ENCODE measurements at regions of chr19 and their contacts with region 1.

Region 1: DNA sequence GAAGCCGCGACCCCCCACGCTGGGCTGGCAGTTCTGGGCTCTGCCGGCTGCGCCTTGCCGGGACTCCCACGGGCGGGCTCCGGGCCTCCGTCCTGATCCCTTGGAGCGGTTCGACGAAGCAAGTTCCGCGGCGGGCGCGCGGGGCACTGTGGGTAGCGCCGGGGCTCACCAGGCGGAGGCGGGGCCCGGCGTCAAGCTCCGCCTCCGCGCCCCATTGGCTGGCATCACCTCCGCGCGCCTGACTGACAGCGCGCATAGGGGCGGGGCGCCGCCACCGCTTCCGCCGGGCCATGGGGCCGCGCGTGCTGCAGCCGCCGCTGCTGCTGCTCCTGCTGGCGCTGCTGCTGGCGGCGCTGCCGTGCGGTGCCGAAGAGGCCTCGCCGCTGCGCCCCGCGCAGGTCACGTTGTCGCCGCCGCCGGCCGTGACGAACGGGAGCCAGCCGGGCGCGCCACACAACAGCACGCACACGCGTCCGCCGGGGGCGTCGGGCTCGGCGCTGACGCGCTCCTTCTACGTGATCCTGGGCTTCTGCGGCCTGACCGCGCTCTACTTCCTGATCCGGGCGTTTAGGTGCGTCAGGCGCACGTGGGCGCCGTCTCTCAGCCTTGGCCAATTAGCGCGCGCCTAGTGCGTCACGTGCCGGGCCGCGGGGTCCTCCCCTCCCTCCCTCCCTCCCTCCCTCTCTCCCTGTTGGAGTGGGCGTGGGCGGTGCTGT is at the start of gene FAM174C:
- DNase-seq: peak; percentile 80
- H3K4me3 ChIP-seq: peak within 1 kb of the TSS; percentile 70
- CTCF ChIP-seq: no peak

Region 2: DNA sequence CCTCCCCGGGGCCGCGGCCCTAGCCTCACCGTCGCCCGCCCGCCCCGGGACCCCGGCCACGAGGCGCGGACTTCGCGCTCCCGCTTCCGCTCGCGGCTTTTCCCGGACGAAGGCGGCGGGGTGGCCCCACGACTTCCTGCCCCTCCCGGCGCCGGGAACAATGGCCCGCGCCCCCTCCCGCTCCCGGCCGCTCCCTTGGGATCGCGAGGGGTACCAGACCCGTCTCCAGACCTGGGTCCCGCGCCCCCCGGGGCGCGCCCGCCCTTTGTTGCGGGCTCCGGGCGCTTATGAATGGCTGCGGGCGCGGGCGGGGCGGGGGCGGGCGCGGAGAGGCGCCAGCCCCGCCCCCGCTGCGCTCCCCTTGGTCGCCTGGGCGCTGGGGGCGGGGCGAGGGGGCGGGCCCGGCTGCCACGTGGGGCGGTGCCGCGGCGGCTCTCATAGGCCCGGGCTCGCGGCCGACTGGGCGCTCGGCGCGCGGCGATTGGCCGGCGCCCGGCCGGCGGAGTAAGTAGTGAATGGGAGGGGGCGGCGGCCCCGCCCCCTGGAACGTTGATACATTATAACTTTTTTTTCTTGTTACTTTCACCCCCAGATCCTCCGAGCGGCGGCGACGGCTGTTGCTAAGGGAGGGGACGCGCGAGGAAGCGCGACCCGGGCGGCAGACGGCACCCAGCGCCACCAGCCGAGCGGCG is 26.0 kb before region 1 on chr19:
- CTCF ChIA-PET with region 1: interaction called, 46 read pairs
- POLR2A ChIA-PET with region 1: interaction called, 12 read pairs
- DNase-seq: no peak
- H3K4me3 ChIP-seq: peak overlapping the region; percentile 82
- CTCF ChIP-seq: no peak

Region 3: DNA sequence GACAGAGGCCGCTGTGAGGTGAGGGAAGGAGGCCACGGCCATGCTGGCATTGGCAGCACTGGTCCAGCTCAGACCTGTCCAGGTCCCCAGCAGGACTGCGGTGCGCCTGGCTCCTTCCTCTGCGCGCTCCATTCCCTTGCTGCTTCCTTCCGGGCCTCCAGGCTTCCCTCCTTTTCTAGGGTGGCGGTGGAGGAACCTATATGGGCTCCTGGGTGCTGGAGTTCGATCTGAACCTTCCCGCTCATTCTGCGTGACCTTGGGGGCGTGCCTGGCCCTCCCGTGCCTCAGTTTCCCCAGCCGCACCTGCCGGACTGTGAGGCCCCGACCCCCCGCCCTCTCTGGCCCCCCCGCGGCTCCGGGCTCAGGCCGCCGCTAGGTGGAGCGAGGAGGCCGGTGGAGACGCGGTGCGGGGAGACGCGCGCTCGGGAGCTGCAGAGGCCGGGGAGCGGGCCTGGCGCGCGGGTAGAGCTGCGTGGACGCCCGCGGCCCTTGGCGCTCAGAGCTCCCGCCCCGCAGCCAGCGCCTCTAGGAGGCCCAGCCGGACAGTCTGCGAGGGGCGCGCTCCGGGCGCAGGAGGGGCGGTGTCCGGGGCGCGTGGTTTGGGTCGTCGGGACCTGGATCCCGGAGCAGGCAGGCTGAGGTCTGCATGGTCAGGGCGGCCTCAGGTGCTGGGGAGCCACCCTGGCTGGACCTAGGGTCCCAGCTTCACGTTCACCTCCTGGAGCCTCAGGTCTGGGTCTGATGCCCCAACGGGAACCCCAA is 40.2 kb after region 1 on chr19:
- CTCF ChIA-PET with region 1: interaction called, 12 read pairs
- POLR2A ChIA-PET with region 1: no interaction called
- DNase-seq: no peak
- H3K4me3 ChIP-seq: peak overlapping the region; percentile 20; the same call in 1 of the 2 replicates
- CTCF ChIP-seq: peak; percentile 77

Region 4: DNA sequence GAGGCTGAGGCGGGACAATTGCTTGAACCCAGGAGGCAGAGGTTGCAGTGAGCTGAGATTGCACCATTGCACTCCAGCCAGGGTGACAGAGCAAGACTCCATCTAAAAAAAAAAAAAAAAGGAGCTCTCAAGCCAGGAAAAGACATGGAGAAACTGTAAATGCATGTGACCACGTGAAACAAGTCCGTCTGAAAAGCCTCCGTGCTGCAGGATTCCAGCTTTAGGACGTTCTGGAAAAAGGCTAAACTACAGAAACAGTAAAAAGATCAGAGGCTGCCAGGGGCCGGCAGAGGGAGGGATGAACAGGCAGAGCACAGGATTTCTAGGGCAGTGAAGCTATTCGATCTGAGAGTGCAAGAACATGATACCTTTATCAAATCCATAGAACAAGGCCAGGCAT is 67.6 kb after region 1 on chr19:
- CTCF ChIA-PET with region 1: no interaction called
- POLR2A ChIA-PET with region 1: no interaction called
- DNase-seq: no peak
- H3K4me3 ChIP-seq: no peak overlapping the region
- CTCF ChIP-seq: no peak

Region 5: GRCh38 chr19:1373534-1374249 is 98.3 kb after region 1 on chr19:
- CTCF ChIA-PET with region 1: interaction called, 22 read pairs
- POLR2A ChIA-PET with region 1: no interaction called
- DNase-seq: no peak
- H3K4me3 ChIP-seq: no peak overlapping the region
- CTCF ChIP-seq: no peak

Region 6: DNA sequence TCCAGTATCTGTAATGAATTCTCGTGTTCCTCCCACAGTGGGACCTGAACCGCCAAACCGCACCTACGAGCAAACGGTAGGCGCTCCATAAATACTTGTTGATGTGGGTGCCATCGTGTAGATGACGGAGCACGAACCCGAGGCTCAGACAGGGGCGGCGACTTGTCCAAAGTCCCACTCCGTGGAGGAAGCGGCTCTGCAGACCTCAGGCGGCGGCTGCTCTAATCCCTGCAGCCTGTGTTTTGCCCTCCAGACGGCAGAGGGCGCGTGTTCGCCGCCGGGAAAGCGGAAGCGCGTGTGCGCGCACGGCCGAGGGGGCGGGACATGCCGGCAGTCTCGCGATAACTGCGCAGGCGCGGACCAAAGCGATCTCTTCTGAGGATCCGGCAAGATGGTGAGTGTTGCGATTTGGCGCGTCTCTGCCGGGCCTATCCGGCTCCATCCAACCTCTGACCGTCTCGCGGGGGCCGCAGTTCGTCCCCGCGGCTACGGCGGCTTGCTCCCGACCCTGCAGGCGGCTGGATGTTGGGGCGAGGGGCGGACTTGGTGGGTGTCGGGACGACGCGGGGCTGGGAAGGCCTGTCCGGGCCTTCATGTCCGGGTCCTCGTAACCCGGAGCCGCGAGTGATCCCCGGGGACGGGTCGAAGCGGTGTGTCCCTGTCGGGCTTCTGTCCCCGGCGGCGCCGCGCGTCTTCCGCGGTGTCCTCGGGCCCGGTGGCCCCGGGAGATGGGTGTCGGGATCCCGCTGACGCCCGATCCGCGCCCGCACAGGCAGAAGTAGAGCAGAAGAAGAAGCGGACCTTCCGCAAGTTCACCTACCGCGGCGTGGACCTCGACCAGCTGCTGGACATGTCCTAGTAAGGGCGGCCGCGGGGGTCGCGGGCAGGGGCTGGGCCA is 162.9 kb after region 1 on chr19 and contains the start of gene RPS15:
- CTCF ChIA-PET with region 1: interaction called, 10 read pairs
- POLR2A ChIA-PET with region 1: no interaction called
- DNase-seq: peak; percentile 61
- H3K4me3 ChIP-seq: peak within 1 kb of the TSS; percentile 89
- CTCF ChIP-seq: peak; percentile 98